PC-3 (cell line): ENCODE measurements at regions of chr2 and their contacts with region 1.

Region 1: GRCh38 chr2:98444436-98445176 is at the start of gene INPP4A:
- DNase-seq: peak; percentile 80
- ATAC-seq: peak; percentile 90
- H3K4me3 ChIP-seq: peak within 1 kb of the TSS; percentile 85
- H3K27ac ChIP-seq: no peak within 1 kb of the TSS
- H3K4me1 ChIP-seq: peaks cover 22% of the 10 kb centered on the region
- H3K27me3 ChIP-seq: no peaks in the 10 kb centered on the region
- CTCF ChIP-seq: no peak
- total RNA-seq, gene INPP4A: 23.4 and 28.6 TPM in 2 replicates

Region 2: GRCh38 chr2:98086491-98087446 is 357.8 kb before region 1 on chr2 and contains the start of gene VWA3B:
- CTCF ChIA-PET with region 1: no interaction called
- POLR2A ChIA-PET with region 1: interaction called, 18 read pairs
- intact Hi-C with region 1: no loop called
- DNase-seq: peak; percentile 86
- ATAC-seq: peak; percentile 95
- H3K4me3 ChIP-seq: peak within 1 kb of the TSS; percentile 70
- H3K27ac ChIP-seq: no peak within 1 kb of the TSS
- H3K4me1 ChIP-seq: peaks cover 9% of the 10 kb centered on the region; the same call in 1 of the 2 replicates
- H3K27me3 ChIP-seq: no peaks in the 10 kb centered on the region
- CTCF ChIP-seq: no peak
- total RNA-seq, gene VWA3B: not detected in 2 replicates

Region 3: DNA sequence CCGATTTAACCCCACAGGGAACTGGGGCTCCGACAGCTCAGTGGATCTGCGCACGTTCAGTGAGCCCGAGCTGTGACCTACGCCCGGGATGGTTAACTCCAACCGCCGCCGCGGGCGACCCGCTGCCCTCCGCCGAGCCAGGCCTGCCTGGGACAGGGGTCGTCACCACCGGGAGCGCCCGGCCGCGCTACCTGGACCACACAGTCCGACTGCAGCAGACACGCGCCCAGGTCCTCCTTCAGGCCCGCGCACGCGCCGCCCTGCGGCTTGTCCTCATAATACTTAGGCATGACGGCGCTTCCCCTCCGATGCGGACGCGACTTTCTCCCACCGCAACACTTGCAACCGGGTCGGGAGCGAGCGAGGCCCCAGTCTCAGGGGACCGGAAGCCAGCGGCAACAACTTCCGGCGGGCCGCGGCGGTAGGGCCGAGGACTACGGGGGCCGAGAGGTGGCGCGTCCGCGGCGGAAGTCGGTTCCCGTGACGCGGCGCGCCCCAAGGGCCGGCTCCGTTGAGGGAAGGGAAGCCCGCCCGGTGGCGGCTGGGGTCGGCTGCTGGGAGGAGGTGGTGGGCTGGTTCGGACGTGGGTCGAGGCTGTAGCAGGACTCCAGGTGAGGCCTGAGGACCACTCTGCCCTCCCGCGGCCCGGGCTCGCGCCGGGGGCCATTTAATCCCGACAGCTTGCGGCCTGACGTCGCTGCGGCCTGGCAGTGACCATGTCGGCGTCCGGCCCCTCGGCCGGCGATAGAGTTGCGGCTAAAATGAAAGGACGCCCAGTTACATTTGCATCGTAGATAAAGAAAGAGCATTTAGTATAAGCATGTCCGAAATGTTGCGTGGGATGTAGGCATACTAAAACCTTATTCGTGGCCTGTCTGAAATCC is 163.8 kb after region 1 on chr2 and contains the starts of genes COA5 and UNC50:
- CTCF ChIA-PET with region 1: no interaction called
- POLR2A ChIA-PET with region 1: no interaction called
- intact Hi-C with region 1: loop called (anchors 10 kb)
- DNase-seq: peak; percentile 87
- ATAC-seq: peak; percentile 81
- H3K4me3 ChIP-seq: peak within 1 kb of the TSS; percentile 80
- H3K27ac ChIP-seq: peak within 1 kb of the TSS; percentile 63
- H3K4me1 ChIP-seq: peaks cover 34% of the 10 kb centered on the region
- H3K27me3 ChIP-seq: no peaks in the 10 kb centered on the region
- CTCF ChIP-seq: no peak
- total RNA-seq, gene COA5: 34.0 and 37.2 TPM in 2 replicates
- total RNA-seq, gene UNC50: 18.4 and 26.0 TPM in 2 replicates